ENCODE measurements at regions of chr15 and their contacts with region 1.

Region 1: DNA sequence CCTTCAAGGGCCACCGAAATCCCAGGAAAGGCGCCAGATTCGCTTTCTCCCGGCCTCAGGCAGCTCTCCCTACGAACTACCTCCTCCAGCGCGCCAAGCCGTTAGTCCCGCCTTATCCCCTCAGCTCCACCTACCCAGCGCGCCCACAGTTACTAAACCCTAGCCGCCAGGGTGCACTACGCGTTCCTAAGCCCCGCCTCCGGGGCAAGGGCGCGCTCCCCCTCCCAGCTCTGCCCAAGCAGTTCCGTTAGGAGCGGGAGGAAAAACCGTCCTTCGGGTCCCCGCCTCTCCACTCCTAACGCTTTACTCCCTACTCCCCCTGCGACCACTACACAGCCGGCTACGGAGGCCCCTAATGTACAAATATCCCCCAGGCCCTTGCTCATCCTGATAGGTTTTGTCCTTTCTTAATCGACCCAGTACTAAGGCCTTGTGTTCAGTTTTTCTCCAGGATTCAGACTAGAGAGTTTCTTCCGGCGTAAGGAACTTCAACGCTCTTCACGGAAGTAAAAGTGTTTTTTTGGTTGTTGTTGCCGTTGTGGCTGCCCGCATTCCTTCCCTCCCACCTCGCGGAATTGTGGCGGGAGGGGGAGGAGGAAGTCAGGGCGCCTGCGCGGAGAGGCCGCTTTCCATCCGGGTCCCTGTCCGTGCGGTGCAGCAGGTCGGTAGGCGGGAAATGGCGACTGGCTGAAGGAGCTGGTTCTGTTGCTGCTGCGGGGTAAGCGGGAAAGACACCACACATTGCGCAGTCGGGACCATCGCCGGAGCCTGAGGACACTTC is at the start of gene CTDSPL2:
- DNase-seq: peak; percentile 100
- H3K4me3 ChIP-seq: peak within 1 kb of the TSS; percentile 62 to 96 (median 68)
- H3K27ac ChIP-seq: peak within 1 kb of the TSS; percentile 96
- H3K4me1 ChIP-seq: peaks cover 18% of the 10 kb centered on the region
- H3K27me3 ChIP-seq: no peaks in the 10 kb centered on the region
- CTCF ChIP-seq: peak; percentile 17 to 46
- POLR2A ChIP-seq: peak; percentile 73
- total RNA-seq, gene CTDSPL2: 46.0 and 55.1 TPM in 2 replicates

Region 2: GRCh38 chr15:43872416-43873020 is 554.6 kb before region 1 on chr15:
- CTCF ChIA-PET with region 1: interaction called, 3 read pairs
- POLR2A ChIA-PET with region 1: no interaction called
- dilution Hi-C with region 1: no loop called
- intact Hi-C with region 1: loop called (anchors 5 kb)
- DNase-seq: peak; percentile 70
- H3K4me3 ChIP-seq: no peak overlapping the region
- H3K27ac ChIP-seq: no peak overlapping the region
- H3K4me1 ChIP-seq: peaks cover 3% of the 10 kb centered on the region
- H3K27me3 ChIP-seq: no peaks in the 10 kb centered on the region
- CTCF ChIP-seq: peak; percentile 55 to 68
- POLR2A ChIP-seq: no peak

Region 3: GRCh38 chr15:44222478-44222877 is 204.7 kb before region 1 on chr15:
- CTCF ChIA-PET with region 1: no interaction called
- POLR2A ChIA-PET with region 1: no interaction called
- dilution Hi-C with region 1: no loop called
- intact Hi-C with region 1: loop called (anchors 5 kb)
- DNase-seq: peak; percentile 59
- H3K4me3 ChIP-seq: no peak overlapping the region
- H3K27ac ChIP-seq: no peak overlapping the region
- H3K4me1 ChIP-seq: peaks cover 14% of the 10 kb centered on the region
- H3K27me3 ChIP-seq: peaks cover 9 to 12% of the 10 kb centered on the region in 2 experiments
- CTCF ChIP-seq: no peak
- POLR2A ChIP-seq: no peak

Region 4: GRCh38 chr15:44489464-44489863 is 62.3 kb after region 1 on chr15:
- CTCF ChIA-PET with region 1: interaction called, 9 read pairs
- POLR2A ChIA-PET with region 1: no interaction called
- dilution Hi-C with region 1: no loop called
- intact Hi-C with region 1: loop called (anchors 2 kb)
- DNase-seq: peak; percentile 77
- H3K4me3 ChIP-seq: no peak overlapping the region
- H3K27ac ChIP-seq: peak overlapping the region; percentile 4
- H3K4me1 ChIP-seq: peaks cover 12% of the 10 kb centered on the region
- H3K27me3 ChIP-seq: no peaks in the 10 kb centered on the region
- CTCF ChIP-seq: no peak
- POLR2A ChIP-seq: no peak

Region 5: GRCh38 chr15:44536962-44537734 is 110.0 kb after region 1 on chr15 and contains the start of gene EIF3J:
- CTCF ChIA-PET with region 1: interaction called, 3 read pairs
- POLR2A ChIA-PET with region 1: interaction called, 10 read pairs
- dilution Hi-C with region 1: no loop called
- intact Hi-C with region 1: loop called (anchors 1 kb)
- DNase-seq: peak; percentile 98
- H3K4me3 ChIP-seq: peak within 1 kb of the TSS; percentile 70 to 92 (median 92)
- H3K27ac ChIP-seq: peak within 1 kb of the TSS; percentile 80
- H3K4me1 ChIP-seq: peaks cover 35% of the 10 kb centered on the region
- H3K27me3 ChIP-seq: no peaks in the 10 kb centered on the region
- CTCF ChIP-seq: no peak
- POLR2A ChIP-seq: no peak
- total RNA-seq, gene EIF3J: 132 and 150 TPM in 2 replicates

Region 6: DNA sequence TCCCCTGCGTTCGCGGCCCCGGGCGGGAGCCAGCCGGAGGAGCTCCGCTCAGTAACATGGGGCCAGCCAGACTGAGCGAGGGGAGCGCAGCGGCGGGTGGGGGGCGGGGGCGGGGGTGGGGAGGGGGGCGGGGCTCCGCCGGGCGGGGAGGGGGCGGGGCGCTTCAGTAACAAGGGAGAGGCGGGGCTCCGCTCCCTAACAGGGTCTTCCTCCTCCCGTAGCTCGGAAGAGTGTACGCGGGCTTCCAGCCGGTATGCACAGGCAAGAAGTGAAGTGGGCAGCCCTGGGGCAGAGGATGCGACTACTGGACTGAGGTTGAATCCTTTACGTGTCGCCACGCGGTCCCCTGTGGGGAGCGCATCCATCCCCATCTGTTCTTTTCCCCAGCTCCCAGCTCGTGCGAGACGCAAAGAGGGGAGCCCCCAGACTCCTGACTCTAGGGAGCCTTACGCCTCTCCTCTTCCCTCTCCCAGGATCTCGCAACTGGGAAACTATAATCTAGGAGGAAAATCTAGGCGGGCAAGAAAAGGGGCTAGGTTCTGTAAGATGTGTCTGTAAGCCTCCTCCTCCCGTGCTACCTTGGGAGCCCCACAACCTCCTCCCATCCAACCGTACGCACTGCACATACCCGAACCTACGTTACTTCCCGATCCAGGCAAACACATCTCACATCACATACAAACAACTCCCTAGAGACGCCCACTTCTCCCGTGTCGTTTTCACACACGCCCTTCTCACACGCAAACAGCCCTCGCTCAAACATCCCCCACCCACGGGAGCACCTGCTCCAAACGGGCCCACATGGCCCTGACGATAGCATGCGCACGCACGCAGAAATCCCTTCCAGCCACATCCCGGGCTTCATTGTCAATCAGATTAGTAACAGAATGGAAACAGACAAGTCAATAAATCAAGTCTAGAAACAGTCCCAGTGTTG is 761.0 kb after region 1 on chr15 and contains the start of gene SHF:
- CTCF ChIA-PET with region 1: no interaction called
- POLR2A ChIA-PET with region 1: no interaction called
- dilution Hi-C with region 1: no loop called
- intact Hi-C with region 1: no loop called
- DNase-seq: peak; percentile 49
- H3K4me3 ChIP-seq: peak within 1 kb of the TSS; percentile 43 to 68 (median 67)
- H3K27ac ChIP-seq: no peak within 1 kb of the TSS
- H3K4me1 ChIP-seq: peaks cover 6% of the 10 kb centered on the region
- H3K27me3 ChIP-seq: peaks cover 2 to 9% of the 10 kb centered on the region in 2 experiments
- CTCF ChIP-seq: no peak
- POLR2A ChIP-seq: no peak
- total RNA-seq, gene SHF: 5.2 and 5.6 TPM in 2 replicates